HepG2 (cell line): ENCODE measurements at regions of chr14 and their contacts with region 1.

Region 1: DNA sequence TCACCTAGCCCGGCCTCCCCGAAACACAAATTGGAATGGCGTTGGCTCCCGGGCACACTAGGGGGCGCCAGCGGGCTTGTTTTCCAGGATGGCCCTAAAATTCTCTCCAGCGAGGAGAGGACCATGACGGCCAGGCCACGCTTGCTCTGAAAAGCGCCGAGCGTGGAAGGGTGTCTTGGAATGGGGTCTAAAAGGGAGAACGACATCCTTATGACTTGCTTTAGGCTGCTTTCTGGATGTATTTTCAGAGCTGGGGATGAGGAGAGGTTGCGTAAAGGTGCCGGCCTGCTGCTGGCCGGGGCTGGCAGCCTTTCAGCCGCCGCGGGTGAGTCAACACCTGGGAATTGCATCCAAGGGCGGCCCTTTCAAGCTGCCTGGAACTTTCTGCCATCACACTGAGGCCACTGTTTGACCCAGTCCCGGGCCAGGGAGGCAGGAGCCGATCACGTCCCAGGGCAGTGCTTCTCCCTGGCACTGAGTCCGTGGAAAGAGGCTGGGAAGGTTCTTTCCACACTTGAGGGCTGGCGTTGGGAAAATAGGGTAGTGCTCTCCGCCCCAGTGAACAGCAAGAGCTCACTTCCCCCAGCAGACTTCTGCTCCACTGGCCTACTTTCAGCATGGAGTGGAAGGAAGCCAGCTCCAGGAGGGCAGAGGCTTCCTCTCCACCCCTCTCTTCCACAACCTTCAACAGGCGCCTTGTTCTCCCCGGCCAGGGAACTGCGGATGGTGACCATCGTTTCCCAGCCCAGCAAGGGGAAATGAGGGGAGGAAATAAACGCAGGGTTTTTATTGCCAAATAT is 216.2 kb downstream of the TTC8 start:
- DNase-seq: peak; percentile 93
- ATAC-seq: peak; percentile 96
- H3K4me3 ChIP-seq: peak overlapping the region; percentile 51 to 76 (median 54)
- H3K27ac ChIP-seq: peak overlapping the region; percentile 100
- H3K4me1 ChIP-seq: peaks cover 28% of the 10 kb centered on the region
- H3K27me3 ChIP-seq: no peaks in the 10 kb centered on the region
- CTCF ChIP-seq: peak; percentile 96
- EP300 ChIP-seq: peak; percentile 86 to 87; a peak in 3 of 4 replicates
- POLR2A ChIP-seq: peak; percentile 58 to 94
- RAD21 ChIP-seq: peak; percentile 89

Region 2: DNA sequence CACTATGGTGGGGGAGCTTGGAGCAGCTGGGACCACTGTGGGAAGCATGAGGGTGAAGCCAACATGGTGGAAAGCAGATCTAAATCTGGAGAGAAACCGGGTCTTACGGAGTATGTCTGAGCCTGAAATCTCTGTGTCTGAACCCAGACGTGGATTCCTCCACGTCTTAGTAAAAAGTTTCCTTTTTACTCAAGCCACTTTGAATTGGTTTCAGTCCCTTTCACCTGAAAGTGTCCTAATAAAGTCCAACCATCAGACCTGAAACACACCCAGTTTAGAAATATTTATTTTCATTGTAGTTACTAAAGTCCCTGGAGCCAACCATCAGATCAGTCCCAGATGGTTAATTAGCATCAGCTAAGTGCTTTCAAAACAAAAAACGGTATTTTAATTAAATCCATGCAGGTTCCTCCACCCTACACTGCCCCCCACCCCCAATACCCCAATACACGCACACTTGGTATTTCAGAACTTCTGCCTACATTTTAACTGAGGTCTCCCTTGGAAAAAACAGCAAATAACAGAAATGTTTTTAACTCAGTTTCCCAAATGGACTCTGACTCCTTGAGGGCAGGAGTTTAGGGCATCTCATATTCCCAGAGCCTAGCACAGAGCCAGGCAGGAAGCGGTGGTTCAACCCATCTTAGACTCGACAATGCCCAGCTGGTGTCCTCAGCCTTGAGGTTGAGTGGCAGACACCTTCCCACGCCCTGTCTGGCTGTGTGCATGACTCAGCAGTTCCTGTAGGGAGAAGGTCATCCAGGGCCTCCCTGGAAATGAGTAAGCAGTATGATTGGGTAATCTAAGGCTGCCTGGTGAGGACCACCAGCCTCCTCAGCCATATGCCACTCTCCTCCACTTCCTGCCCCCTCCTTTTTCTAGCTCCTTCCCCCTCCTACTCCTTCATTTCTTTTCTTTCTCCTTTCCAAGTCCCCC is 40.4 kb before region 1 on chr14:
- CTCF ChIA-PET with region 1: no interaction called
- POLR2A ChIA-PET with region 1: no interaction called
- in situ Hi-C with region 1: no loop called
- intact Hi-C with region 1: no loop called
- DNase-seq: peak; percentile 29
- ATAC-seq: peak; percentile 36
- H3K4me3 ChIP-seq: no peak overlapping the region
- H3K27ac ChIP-seq: no peak overlapping the region
- H3K4me1 ChIP-seq: no peaks in the 10 kb centered on the region
- H3K27me3 ChIP-seq: peaks cover 0 to 2% of the 10 kb centered on the region in 2 experiments; a peak in 1 of 5 replicates
- CTCF ChIP-seq: no peak
- EP300 ChIP-seq: no peak
- POLR2A ChIP-seq: no peak
- RAD21 ChIP-seq: no peak

Region 3: GRCh38 chr14:89053303-89053702 is 12.6 kb after region 1 on chr14:
- CTCF ChIA-PET with region 1: no interaction called
- POLR2A ChIA-PET with region 1: no interaction called
- in situ Hi-C with region 1: no loop called
- intact Hi-C with region 1: no loop called
- DNase-seq: no peak
- ATAC-seq: no peak
- H3K4me3 ChIP-seq: no peak overlapping the region
- H3K27ac ChIP-seq: no peak overlapping the region
- H3K4me1 ChIP-seq: no peaks in the 10 kb centered on the region
- H3K27me3 ChIP-seq: no peaks in the 10 kb centered on the region; a peak in 1 of 5 replicates
- CTCF ChIP-seq: no peak
- EP300 ChIP-seq: no peak
- POLR2A ChIP-seq: no peak
- RAD21 ChIP-seq: no peak

Region 4: DNA sequence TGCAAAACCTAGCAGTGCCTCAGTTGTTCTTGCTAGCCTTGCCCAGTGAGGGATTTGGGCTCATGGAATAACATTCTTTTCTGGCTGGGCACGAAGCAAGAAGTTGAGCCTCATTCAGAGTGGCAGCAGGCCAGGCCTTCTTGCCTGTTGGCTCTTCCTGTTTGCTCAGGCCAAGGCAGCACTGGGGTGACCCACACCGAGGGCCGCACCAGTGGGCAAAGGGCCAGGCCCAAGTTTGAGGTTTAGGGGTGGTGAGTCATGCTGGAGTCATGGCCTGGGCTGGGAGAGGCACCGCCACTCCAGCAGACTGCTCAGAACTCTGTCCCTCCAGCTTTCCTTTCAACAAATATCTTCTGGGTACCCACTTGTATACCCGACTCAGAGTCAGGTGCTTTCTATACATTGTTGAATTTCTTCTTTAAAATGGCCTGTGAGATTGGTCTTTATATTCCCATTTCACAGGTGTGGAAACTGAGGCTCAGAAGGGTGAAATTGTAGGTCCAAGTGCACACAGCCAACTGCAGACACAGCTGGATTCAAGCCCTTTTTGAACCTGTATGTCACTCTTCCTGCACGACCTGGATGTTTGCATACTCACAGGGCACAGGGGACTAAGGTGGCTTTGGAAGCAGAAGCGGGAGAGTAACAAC is 97.0 kb after region 1 on chr14:
- CTCF ChIA-PET with region 1: no interaction called
- POLR2A ChIA-PET with region 1: interaction called, 3 read pairs
- in situ Hi-C with region 1: no loop called
- intact Hi-C with region 1: loop called (anchors 2 kb)
- DNase-seq: peak; percentile 45
- ATAC-seq: peak; percentile 47
- H3K4me3 ChIP-seq: no peak overlapping the region
- H3K27ac ChIP-seq: no peak overlapping the region
- H3K4me1 ChIP-seq: peaks cover 40% of the 10 kb centered on the region
- H3K27me3 ChIP-seq: peaks cover 0 to 1% of the 10 kb centered on the region in 2 experiments; a peak in 3 of 5 replicates
- CTCF ChIP-seq: no peak
- EP300 ChIP-seq: no peak
- POLR2A ChIP-seq: no peak
- RAD21 ChIP-seq: no peak

Region 5: DNA sequence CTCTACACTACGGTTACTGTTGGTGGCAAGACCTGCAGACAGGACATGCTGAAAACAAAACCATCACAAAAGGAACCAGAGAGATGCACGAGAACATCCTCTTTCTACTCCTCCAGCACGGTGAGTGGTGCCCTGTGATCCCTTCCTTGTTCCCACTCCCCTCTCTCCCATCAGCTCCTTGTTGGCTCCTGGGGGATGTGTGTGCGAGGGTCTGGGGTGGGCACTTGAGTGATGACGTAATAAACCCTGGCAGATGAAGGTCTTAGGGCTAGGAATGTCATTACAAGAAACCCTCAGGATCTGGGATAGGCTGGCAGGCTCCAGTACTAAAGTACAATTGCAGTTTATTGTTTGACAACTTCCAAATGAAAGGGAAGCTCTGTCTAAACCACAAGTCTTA is 114.8 kb after region 1 on chr14:
- CTCF ChIA-PET with region 1: no interaction called
- POLR2A ChIA-PET with region 1: no interaction called
- in situ Hi-C with region 1: no loop called
- intact Hi-C with region 1: no loop called
- DNase-seq: no peak
- ATAC-seq: no peak
- H3K4me3 ChIP-seq: no peak overlapping the region
- H3K27ac ChIP-seq: no peak overlapping the region
- H3K4me1 ChIP-seq: peaks cover 4% of the 10 kb centered on the region; the same call in 1 of the 2 replicates
- H3K27me3 ChIP-seq: no peaks in the 10 kb centered on the region
- CTCF ChIP-seq: no peak
- EP300 ChIP-seq: no peak
- POLR2A ChIP-seq: peak in 1 of 2 experiments; percentile 36; a peak in 1 of 4 replicates
- RAD21 ChIP-seq: no peak

Region 6: GRCh38 chr14:89214221-89214936 is 173.7 kb after region 1 on chr14:
- CTCF ChIA-PET with region 1: no interaction called
- POLR2A ChIA-PET with region 1: no interaction called
- in situ Hi-C with region 1: no loop called
- intact Hi-C with region 1: loop called (anchors 1 kb)
- DNase-seq: peak; percentile 86
- ATAC-seq: peak; percentile 93
- H3K4me3 ChIP-seq: no peak overlapping the region
- H3K27ac ChIP-seq: peak overlapping the region; percentile 53
- H3K4me1 ChIP-seq: peaks cover 57% of the 10 kb centered on the region
- H3K27me3 ChIP-seq: no peaks in the 10 kb centered on the region
- CTCF ChIP-seq: peak; percentile 56
- EP300 ChIP-seq: peak in 1 of 2 experiments; percentile 33; a peak in 1 of 4 replicates
- POLR2A ChIP-seq: no peak
- RAD21 ChIP-seq: 0 out of 2 replicates have a peak, but pooled peaks have one; percentile 49

Region 7: DNA sequence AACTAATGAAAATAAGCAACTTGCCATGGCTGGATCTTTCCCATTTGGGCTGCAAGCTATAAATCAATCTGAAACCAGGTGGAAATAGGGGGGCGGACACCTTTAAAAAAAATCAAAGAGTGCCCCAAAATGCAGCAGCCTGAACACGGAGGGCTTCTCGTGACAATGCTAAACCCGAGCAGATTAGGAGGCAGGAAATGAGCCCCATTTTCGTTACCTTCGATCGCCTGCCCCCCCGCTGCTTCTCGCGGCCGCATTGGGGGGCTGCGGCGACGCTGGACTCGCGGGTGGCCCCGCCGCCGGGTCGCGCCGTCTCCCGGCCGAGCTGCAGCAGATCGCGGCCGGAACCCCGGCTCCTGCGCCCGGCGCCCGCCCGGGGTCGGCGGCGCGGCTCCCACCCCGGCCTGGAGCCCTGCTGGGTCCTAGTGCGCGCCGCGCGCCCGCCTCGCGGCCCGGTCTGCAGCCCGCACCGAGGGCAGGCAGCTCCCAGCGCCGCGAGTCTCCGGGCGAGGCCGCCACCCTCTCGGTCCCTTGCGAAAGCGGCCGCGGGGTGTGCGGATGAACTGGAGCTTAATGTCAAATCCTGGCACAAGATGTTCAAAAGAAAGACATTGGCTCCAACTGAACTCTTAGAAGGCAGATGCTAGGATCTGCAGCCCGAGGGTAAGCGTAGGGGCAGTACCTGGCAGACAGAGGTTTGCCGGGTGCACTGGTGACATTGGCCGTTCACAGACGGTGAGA is 578.3 kb after region 1 on chr14:
- CTCF ChIA-PET with region 1: no interaction called
- POLR2A ChIA-PET with region 1: no interaction called
- in situ Hi-C with region 1: no loop called
- intact Hi-C with region 1: loop called (anchors 5 kb)
- DNase-seq: peak; percentile 12
- ATAC-seq: peak; percentile 93
- H3K4me3 ChIP-seq: peak overlapping the region; percentile 79 to 92 (median 80)
- H3K27ac ChIP-seq: peak overlapping the region; percentile 65
- H3K4me1 ChIP-seq: peaks cover 75% of the 10 kb centered on the region
- H3K27me3 ChIP-seq: no peaks in the 10 kb centered on the region; a peak in 2 of 5 replicates
- CTCF ChIP-seq: no peak
- EP300 ChIP-seq: no peak; a peak in 1 of 4 replicates
- POLR2A ChIP-seq: peak in 1 of 2 experiments; percentile 56; a peak in 2 of 4 replicates
- RAD21 ChIP-seq: peak; percentile 83; the same call in 1 of the 2 replicates

Region 8: GRCh38 chr14:89773644-89774316 is 733.1 kb after region 1 on chr14:
- CTCF ChIA-PET with region 1: no interaction called
- POLR2A ChIA-PET with region 1: no interaction called
- in situ Hi-C with region 1: loop called (anchors 25 kb)
- intact Hi-C with region 1: loop called (anchors 5 kb)
- DNase-seq: peak; percentile 61
- ATAC-seq: peak; percentile 99
- H3K4me3 ChIP-seq: peak overlapping the region; percentile 51 to 71 (median 56); a peak in 5 of 6 replicates
- H3K27ac ChIP-seq: peak overlapping the region; percentile 57
- H3K4me1 ChIP-seq: peaks cover 46% of the 10 kb centered on the region
- H3K27me3 ChIP-seq: no peaks in the 10 kb centered on the region
- CTCF ChIP-seq: no peak
- EP300 ChIP-seq: 0 out of 4 replicates have a peak, but pooled peaks of 1 of the 2 experiments have one; percentile 23
- POLR2A ChIP-seq: peak in 1 of 2 experiments; percentile 50; a peak in 2 of 4 replicates
- RAD21 ChIP-seq: no peak